Activated T-helper 2 cell treated with anti-CD3 and anti-CD28 coated beads, Interferon-gamma antibody, Interleukin-2, Interleukin-4, amounts not matched to agents 10 μg/mL and 5 μg/mL and 100 μg/mL, durations not matched to agents 14 hours and 24 hours and 36 hours (primary cell): ENCODE measurements at regions of chr4 and their contacts with region 1.

Region 1: DNA sequence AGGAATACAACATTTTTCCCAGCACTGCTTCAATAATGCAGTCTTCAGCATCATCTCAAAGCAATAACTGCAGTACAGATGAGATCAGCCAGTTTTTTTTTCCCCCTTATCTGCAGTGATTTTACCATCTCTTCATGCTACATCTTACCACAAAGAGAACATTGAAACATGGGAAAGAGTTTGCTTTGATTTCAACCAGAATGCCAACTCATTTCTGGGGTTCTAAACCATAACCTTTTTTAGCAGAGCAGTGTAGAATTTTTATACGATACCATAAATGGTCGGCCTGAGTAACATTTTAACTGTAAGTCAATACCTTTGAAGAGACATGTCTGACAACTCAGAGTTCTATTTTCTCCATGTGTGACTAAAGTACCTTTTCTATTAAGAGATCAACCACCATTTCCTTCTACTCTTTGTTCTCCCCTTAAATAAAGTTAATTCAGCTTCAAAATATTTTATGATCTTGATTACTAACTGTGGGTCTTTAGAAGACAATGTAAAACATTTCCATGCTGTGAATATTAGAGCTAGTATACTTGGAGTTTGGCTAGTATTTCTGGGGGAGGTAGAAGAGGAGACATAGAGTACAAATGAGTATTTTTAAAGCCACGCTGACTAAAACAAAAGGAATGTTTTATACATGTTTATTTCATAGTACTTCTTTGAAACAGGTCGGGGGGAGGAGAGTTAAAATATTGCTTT is 69.1 kb downstream of the TET2 start:
- DNase-seq: no peak
- H3K4me3 Mint-ChIP-seq: no peak overlapping the region
- H3K27ac Mint-ChIP-seq: peak overlapping the region; percentile 63
- H3K4me1 Mint-ChIP-seq: peaks cover 25% of the 10 kb centered on the region
- H3K27me3 Mint-ChIP-seq: no peaks in the 10 kb centered on the region

Region 2: GRCh38 chr4:104966349-104967033 is 249.3 kb before region 1 on chr4:
- intact Hi-C with region 1: loop called (anchors 5 kb)
- DNase-seq: peak; percentile 43
- H3K4me3 Mint-ChIP-seq: peak overlapping the region; percentile 66
- H3K27ac Mint-ChIP-seq: peak overlapping the region; percentile 86
- H3K4me1 Mint-ChIP-seq: peaks cover 39% of the 10 kb centered on the region
- H3K27me3 Mint-ChIP-seq: peaks cover 4% of the 10 kb centered on the region

Region 3: DNA sequence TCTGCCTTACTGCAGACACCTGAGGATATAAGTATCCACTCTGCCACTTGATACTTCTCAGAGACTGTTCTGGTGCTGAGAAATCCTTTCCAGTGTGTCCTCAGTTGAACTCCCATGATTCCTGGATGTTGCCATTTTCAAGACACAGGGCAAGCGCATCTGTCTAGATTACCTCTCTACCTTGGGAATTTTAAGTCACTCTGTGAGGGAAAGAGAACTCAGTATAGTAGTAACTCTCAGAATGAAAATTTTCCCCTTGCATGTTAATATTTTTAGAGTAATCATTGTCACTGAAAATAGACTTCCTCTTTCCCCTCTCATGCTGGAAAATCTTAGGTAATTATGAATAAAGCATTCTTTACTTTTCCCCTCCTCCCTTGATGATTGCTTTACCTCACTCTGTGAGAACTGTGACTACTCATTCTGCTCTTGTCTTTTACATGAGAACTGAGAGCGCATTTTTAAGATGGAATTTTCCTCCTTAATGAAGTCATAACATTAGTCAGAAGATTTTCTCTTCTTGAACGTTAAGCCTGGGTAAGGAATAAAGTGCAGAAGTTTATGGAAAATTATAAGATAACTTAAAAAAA is 24.0 kb before region 1 on chr4:
- intact Hi-C with region 1: loop called (anchors 2 kb)
- DNase-seq: no peak
- H3K4me3 Mint-ChIP-seq: no peak overlapping the region
- H3K27ac Mint-ChIP-seq: peak overlapping the region; percentile 56
- H3K4me1 Mint-ChIP-seq: peaks cover 51% of the 10 kb centered on the region
- H3K27me3 Mint-ChIP-seq: no peaks in the 10 kb centered on the region

Region 4: GRCh38 chr4:105257826-105258495 is 42.2 kb after region 1 on chr4:
- intact Hi-C with region 1: loop called (anchors 5 kb)
- DNase-seq: no peak
- H3K4me3 Mint-ChIP-seq: no peak overlapping the region
- H3K27ac Mint-ChIP-seq: no peak overlapping the region
- H3K4me1 Mint-ChIP-seq: peaks cover 2% of the 10 kb centered on the region
- H3K27me3 Mint-ChIP-seq: no peaks in the 10 kb centered on the region

Region 5: DNA sequence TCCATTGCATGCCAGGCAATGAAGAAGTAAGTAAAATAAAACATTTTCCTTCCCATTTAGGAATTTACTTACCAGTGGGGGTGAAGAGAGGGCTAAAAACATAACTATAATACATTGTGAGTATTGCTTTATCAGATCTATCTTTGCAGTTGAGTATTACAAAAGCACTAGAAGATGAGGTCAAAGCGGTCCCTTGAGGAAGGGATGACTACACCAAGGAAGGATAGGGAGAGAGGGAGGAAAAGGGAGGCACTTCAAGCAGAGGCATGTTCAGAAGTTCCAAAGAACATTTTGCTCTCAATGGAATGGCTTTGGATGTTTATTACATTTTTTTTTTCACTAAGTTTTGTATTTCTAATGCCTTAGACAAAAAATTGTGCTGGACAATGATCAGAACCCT is 58.7 kb after region 1 on chr4:
- intact Hi-C with region 1: loop called (anchors 2 kb)
- DNase-seq: no peak
- H3K4me3 Mint-ChIP-seq: no peak overlapping the region
- H3K27ac Mint-ChIP-seq: peak overlapping the region; percentile 60
- H3K4me1 Mint-ChIP-seq: peaks cover 38% of the 10 kb centered on the region
- H3K27me3 Mint-ChIP-seq: no peaks in the 10 kb centered on the region

Region 6: GRCh38 chr4:105289368-105289767 is 73.6 kb after region 1 on chr4:
- intact Hi-C with region 1: no loop called
- DNase-seq: no peak
- H3K4me3 Mint-ChIP-seq: no peak overlapping the region
- H3K27ac Mint-ChIP-seq: no peak overlapping the region
- H3K4me1 Mint-ChIP-seq: peaks cover 3% of the 10 kb centered on the region
- H3K27me3 Mint-ChIP-seq: no peaks in the 10 kb centered on the region

Region 7: DNA sequence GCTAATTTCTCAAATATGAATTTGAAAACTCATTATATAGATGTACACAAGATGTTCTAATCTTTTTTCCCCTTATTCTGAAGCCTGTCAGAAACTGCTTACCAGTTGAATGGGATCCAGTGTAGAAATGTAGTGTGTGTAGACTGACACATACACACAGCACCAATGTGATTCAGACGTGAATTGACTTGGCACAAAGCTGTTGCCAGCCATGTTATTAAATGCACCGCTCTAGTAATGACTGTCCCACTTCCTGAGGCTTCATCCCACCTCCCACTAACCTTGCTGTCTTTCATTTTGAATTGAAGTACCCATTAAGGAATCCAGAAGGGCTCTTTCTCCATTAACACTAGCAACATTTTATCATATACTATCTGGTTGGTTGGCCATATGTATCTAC is 111.5 kb after region 1 on chr4:
- intact Hi-C with region 1: no loop called
- DNase-seq: no peak
- H3K4me3 Mint-ChIP-seq: no peak overlapping the region
- H3K27ac Mint-ChIP-seq: no peak overlapping the region
- H3K4me1 Mint-ChIP-seq: peaks cover 2% of the 10 kb centered on the region
- H3K27me3 Mint-ChIP-seq: no peaks in the 10 kb centered on the region